ENCODE measurements at regions of chr15 and their contacts with region 1.

Region 1: DNA sequence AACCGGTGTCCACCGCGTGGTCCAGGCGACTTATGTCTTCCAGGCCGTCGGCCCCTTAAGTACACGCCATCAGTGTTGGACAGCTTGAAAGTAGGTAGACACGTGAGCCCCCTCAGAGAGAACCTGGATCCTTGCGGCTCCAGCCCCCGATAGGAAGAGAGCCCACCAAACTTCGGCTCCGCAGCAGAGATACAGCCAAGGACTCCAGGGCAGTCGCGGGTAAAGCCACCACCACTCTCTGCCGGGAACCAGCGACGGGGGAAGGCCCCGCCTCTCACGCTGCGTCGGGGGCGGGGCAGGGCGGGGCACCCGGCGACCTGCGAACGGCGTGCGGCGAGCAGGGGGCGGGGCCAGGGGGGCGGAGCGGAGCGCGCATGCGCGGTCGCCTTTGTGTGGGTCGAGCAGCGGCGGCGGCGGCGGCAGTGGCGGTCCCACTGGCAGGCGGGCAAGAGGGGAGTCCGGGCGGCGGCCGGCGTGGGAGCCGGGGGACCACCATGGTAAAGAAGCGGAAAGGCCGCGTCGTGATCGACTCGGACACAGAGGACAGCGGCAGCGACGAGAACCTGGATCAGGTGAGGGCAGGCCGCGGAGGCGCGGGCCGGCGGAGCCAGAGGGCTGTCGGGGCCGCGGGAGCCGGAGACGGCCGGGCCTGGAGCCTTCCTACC is at the start of gene RTF1:
- DNase-seq: peak; percentile 89 to 92
- ATAC-seq: peak; percentile 90 to 93
- H3K4me3 ChIP-seq: peak within 1 kb of the TSS; percentile 82 to 94 (median 86)
- H3K27ac ChIP-seq: peak within 1 kb of the TSS; percentile 85 to 96 (median 92)
- H3K4me1 ChIP-seq: peaks cover 16 to 20% of the 10 kb centered on the region in 2 donors
- H3K27me3 ChIP-seq: no peaks in the 10 kb centered on the region
- CTCF ChIP-seq: no peak
- POLR2A ChIP-seq: peak; percentile 86
- total RNA-seq, gene RTF1: 22.7 to 46.8 (median 24.3) TPM

Region 2: DNA sequence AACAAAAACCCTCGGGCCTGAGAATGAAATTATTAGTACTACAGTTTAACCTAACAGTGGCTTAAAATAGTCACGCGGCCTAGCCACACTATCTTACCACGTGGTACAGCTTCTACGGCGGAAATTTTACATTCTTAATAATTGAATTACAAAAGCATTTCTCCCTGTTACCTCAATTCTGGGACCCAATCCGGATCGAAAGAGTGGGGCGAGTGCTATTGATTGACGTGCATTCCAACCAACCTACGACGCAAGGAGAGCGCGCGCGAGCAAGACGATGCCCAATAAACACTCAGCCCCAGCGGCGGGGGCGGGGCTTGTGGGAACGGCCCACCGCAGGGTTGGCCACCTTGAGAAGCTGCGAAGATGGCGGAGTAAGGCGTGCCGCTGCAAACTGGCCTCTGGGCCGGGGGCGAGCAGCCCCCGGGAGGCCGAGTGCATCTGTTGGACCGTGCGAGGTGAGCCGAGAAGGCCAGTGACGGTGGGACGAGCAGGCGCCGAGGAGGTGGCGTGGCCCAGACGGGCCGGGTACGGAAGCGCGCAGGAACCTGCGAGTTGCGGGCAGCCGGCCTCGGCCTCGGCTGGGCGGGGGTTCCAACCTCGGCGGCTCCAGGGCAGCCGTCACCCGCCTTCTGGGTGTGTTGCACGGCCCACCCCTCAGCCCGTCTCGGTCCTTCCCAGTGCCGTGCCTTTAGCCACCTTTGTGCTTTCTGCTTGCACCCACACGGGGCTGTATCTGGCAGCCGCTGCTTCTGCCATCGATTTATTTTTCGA is 133.0 kb before region 1 on chr15:
- in situ Hi-C with region 1: no loop called
- intact Hi-C with region 1: loop called (anchors 5 kb)
- DNase-seq: peak; percentile 98
- ATAC-seq: peak; percentile 96 to 98
- H3K4me3 ChIP-seq: peak overlapping the region; percentile 93 to 98 (median 96)
- H3K27ac ChIP-seq: peak overlapping the region; percentile 94 to 99 (median 96)
- H3K4me1 ChIP-seq: peaks cover 19 to 30% of the 10 kb centered on the region in 2 donors
- H3K27me3 ChIP-seq: no peaks in the 10 kb centered on the region
- CTCF ChIP-seq: peak in 1 of 5 experiments; percentile 10
- POLR2A ChIP-seq: peak; percentile 87 to 93

Region 3: GRCh38 chr15:41309226-41309905 is 107.5 kb before region 1 on chr15:
- in situ Hi-C with region 1: no loop called
- intact Hi-C with region 1: no loop called
- DNase-seq: peak; percentile 48 to 58
- ATAC-seq: peak; percentile 94 to 95
- H3K4me3 ChIP-seq: peak overlapping the region in 1 of 4 donors; percentile 25
- H3K27ac ChIP-seq: peak overlapping the region; percentile 85 to 93 (median 91)
- H3K4me1 ChIP-seq: peaks cover 13 to 54% of the 10 kb centered on the region in 2 donors
- H3K27me3 ChIP-seq: no peaks in the 10 kb centered on the region
- CTCF ChIP-seq: no peak
- POLR2A ChIP-seq: no peak

Region 4: DNA sequence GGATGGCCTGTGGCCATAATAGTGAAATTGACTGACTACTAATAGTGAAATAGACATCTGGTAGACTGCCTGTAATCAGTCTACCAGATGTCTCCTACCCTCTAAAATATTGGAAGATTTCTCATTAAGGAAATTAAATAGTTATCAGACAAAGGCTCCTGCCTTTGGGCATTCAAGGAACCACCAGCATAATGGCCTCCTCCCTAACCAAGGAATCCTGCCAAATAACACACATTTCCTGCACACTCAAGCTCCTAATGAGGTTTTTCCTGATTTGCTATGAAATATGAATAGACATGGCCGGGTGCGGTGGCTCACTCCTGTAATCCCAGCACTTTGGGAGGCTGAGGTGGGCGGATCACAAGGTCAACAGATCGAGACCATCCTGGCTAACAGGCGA is 69.6 kb before region 1 on chr15:
- in situ Hi-C with region 1: no loop called
- intact Hi-C with region 1: loop called (anchors 5 kb)
- DNase-seq: no peak
- ATAC-seq: no peak
- H3K4me3 ChIP-seq: no peak overlapping the region
- H3K27ac ChIP-seq: peak overlapping the region in 1 of 4 donors; percentile 44
- H3K4me1 ChIP-seq: peaks cover 6 to 20% of the 10 kb centered on the region in 2 donors
- H3K27me3 ChIP-seq: no peaks in the 10 kb centered on the region
- CTCF ChIP-seq: no peak
- POLR2A ChIP-seq: no peak

Region 5: DNA sequence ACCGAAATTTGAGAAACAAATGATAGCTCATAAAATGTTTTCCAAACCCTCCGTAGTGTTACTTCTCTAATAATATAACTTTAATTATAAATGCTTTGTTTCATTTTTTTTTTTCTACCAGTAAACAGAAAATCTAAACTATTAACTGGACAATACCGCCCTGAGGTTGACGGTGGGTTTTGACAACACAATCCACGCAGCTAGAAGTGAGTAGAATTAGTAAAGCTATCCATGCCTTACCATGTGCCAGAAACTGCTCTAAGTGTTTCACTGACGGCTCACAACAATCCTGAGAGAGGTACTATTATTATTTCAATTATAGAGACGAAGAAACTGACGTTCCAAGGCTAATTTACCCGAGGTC is 15.0 kb before region 1 on chr15:
- in situ Hi-C with region 1: no loop called
- intact Hi-C with region 1: loop called (anchors 1 kb)
- DNase-seq: no peak
- ATAC-seq: peak; percentile 28 to 32
- H3K4me3 ChIP-seq: peak overlapping the region; percentile 81 to 98 (median 89)
- H3K27ac ChIP-seq: peak overlapping the region; percentile 83 to 95 (median 92)
- H3K4me1 ChIP-seq: peaks cover 9 to 20% of the 10 kb centered on the region in 2 donors
- H3K27me3 ChIP-seq: no peaks in the 10 kb centered on the region
- CTCF ChIP-seq: no peak
- POLR2A ChIP-seq: no peak

Region 6: GRCh38 chr15:41493205-41493901 is 76.5 kb after region 1 on chr15 and contains the start of gene ITPKA:
- in situ Hi-C with region 1: no loop called
- intact Hi-C with region 1: no loop called
- DNase-seq: peak in 1 of 2 donors; percentile 51
- ATAC-seq: peak; percentile 59 to 65
- H3K4me3 ChIP-seq: peak within 1 kb of the TSS; percentile 58 to 88 (median 64)
- H3K27ac ChIP-seq: peak within 1 kb of the TSS in 2 of 4 donors; percentile 29 to 35
- H3K4me1 ChIP-seq: peaks cover 11 to 21% of the 10 kb centered on the region in 2 donors
- H3K27me3 ChIP-seq: peaks cover 61 to 72% (median 62%) of the 10 kb centered on the region in 3 donors
- CTCF ChIP-seq: no peak
- POLR2A ChIP-seq: peak in 1 of 2 donors; percentile 23
- total RNA-seq, gene ITPKA: 0.75 to 12.4 (median 7.0) TPM

Region 7: GRCh38 chr15:42194502-42194901 is 777.6 kb after region 1 on chr15:
- in situ Hi-C with region 1: no loop called
- intact Hi-C with region 1: no loop called
- DNase-seq: peak in 1 of 2 donors; percentile 14
- ATAC-seq: peak in 1 of 2 donors; percentile 41
- H3K4me3 ChIP-seq: no peak overlapping the region
- H3K27ac ChIP-seq: no peak overlapping the region
- H3K4me1 ChIP-seq: no peaks in the 10 kb centered on the region
- H3K27me3 ChIP-seq: no peaks in the 10 kb centered on the region
- CTCF ChIP-seq: no peak
- POLR2A ChIP-seq: no peak